ENCODE measurements at regions of chr1 and their contacts with region 1.

Region 1: DNA sequence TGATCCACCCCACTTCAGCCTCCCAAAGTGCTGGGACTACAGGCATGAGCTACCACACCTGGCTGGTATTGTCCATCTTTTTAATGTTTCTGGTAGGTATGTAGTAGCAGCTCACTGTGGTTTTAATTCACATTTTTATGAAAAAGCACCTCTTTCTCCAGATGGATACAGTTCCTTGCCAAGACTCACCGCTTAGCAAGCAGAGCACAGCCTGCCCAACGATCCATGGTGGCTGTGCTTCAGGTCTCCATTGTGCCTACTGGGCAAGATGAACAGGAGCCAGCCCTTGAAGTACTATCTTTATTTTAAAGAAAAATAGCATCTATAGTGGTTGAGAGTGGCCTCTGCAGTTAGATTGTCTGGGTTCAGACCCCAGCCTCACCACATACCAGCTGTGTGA is 37.6 kb upstream of the GRHL3 start:
- DNase-seq: no peak
- H3K4me3 ChIP-seq: no peak overlapping the region
- H3K4me3 Mint-ChIP-seq: no peak overlapping the region
- H3K27ac Mint-ChIP-seq: no peak overlapping the region
- H3K4me1 ChIP-seq: no peaks in the 10 kb centered on the region
- H3K4me1 Mint-ChIP-seq: no peaks in the 10 kb centered on the region
- H3K27me3 ChIP-seq: no peaks in the 10 kb centered on the region
- H3K27me3 Mint-ChIP-seq: no peaks in the 10 kb centered on the region
- CTCF ChIP-seq: no peak

Region 2: DNA sequence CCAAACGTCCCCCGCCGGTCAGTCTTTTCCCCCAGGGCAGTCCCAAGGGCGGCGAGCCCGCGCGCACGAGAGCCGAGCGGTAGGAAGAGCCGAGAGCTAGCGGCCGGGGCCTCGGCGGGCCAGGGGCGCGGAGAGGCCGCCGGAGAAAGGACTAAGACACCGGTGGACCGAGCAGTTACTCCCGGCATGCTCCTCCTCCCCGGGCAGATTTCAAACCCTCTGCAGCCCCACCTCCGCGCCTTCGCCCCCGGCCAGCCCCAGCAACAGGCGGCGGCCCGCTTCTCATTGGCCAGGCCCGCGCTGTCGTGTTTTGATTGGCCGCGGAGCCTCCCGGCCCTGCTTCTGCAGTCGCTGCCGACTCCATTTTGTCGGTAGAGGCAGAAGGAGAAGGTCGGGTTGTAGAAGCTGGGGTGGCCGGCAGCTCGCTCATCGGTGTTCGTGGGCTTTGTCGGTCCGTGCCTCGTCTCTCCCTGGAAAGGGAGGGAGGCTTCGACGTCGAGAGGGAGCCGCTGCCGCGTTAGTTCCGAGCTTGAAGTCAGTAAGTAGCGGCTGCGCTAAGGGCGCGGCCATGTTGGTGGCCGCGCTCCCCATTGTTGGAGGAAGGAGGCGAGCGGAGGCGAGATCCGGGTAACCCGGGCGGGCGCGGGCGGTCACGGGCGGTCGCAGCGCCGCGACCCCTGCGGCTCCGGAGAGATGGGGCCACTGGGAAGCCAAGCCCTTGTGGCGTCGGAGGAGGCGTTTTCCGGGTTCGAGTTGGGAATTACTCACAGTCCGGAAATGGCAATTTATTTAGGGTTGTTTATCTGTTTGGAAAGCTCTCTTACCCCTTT is 321.9 kb before region 1 on chr1 and contains the start of gene PNRC2:
- CTCF ChIA-PET with region 1: no interaction called
- POLR2A ChIA-PET with region 1: no interaction called
- intact Hi-C with region 1: no loop called
- DNase-seq: peak; percentile 95 to 96
- H3K4me3 ChIP-seq: peak within 1 kb of the TSS; percentile 69
- H3K4me3 Mint-ChIP-seq: peak within 1 kb of the TSS; percentile 94
- H3K27ac Mint-ChIP-seq: peak within 1 kb of the TSS; percentile 99
- H3K4me1 ChIP-seq: peaks cover 12% of the 10 kb centered on the region; the same call in 1 of the 2 replicates
- H3K4me1 Mint-ChIP-seq: no peaks in the 10 kb centered on the region
- H3K27me3 ChIP-seq: no peaks in the 10 kb centered on the region
- H3K27me3 Mint-ChIP-seq: no peaks in the 10 kb centered on the region
- CTCF ChIP-seq: no peak
- total RNA-seq, gene PNRC2: 89.8 and 93.7 TPM in 2 replicates

Region 3: DNA sequence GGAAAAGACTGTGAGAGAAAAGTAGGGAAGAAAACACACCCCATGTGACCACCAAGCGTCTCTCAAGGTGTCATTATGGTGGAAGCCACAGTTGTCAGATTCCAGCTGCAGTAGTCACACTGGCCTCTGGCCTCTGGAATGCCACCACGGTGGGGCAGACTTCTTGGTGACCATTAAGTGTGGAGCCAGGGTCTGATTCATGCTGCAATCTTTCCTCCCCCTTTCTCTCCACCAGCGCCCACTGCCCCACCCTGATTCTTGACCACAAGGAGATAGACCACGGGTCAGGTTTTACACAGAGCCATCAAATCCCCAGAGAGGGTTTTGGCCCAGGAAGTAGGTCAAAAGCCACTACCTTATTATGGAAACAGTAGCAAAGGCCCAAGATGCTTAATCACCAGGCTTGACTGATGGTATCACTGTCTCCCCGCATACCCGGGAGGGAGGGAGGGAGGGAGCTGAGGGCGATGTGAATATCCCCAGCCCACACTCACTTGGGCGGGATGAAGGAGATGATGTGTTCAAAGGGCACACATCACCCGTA is 15.1 kb before region 1 on chr1:
- CTCF ChIA-PET with region 1: no interaction called
- POLR2A ChIA-PET with region 1: no interaction called
- intact Hi-C with region 1: loop called (anchors 1 kb)
- DNase-seq: peak; percentile 30 to 73
- H3K4me3 ChIP-seq: no peak overlapping the region
- H3K4me3 Mint-ChIP-seq: no peak overlapping the region
- H3K27ac Mint-ChIP-seq: no peak overlapping the region
- H3K4me1 ChIP-seq: no peaks in the 10 kb centered on the region
- H3K4me1 Mint-ChIP-seq: no peaks in the 10 kb centered on the region
- H3K27me3 ChIP-seq: no peaks in the 10 kb centered on the region
- H3K27me3 Mint-ChIP-seq: no peaks in the 10 kb centered on the region
- CTCF ChIP-seq: no peak

Measured in Caco-2 (cell line).